ENCODE measurements at regions of chr2 and their contacts with region 1.

Region 1: DNA sequence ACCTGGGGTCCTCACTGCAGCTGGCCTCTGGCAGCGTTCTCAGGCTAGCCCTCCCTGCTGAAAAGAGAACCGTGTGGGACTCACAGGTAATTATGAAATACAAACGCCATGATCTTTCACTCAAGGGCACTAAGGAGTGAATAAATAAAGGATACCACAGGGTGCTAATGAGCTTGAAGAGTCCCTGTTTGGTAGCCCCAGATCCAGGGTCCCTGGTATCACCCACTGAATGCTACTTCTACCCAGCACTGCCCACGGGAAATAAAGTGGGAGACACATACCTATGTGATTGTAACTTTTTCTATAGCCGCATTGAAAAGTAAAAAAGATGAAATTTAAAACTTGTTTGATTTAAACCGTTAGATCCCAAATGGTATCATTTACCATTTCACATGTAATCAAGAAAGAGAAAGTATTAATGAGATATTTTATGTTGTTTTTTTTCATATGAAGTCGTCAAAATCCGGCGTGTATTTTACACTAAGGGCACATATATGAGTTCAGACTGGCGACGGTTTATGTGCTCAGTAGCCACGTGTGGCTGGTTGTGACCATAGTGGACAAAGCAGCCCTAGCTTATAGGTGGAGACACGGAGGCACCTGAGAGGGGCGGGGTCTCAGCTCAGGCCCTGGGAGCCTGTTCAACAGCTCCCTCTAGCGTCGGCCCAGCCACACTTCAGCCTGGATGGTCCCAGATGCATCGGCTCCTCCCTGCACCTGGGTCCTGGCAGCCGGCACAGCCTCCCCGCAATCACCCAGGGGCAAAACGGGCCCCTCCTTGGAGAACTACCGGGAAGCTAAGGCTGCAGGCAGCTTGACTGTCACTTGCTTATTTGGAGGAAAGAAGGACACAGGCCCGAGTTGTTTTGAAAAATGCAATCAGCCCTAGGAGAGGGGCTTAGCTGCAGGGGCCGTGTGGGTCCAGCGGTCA is 39.2 kb downstream of the ODC1 start:
- DNase-seq: peak; percentile 64 to 90 (median 83)
- ATAC-seq: peak; percentile 83
- H3K4me3 ChIP-seq: peak overlapping the region in 1 of 2 experiments; percentile 15
- H3K4me3 Mint-ChIP-seq: peak overlapping the region; percentile 80
- H3K27ac ChIP-seq: peak overlapping the region; percentile 24 to 75
- H3K27ac Mint-ChIP-seq: peak overlapping the region; percentile 94
- H3K4me1 ChIP-seq: peaks cover 40% of the 10 kb centered on the region
- H3K4me1 Mint-ChIP-seq: peaks cover 40% of the 10 kb centered on the region
- H3K27me3 ChIP-seq: no peaks in the 10 kb centered on the region
- H3K27me3 Mint-ChIP-seq: no peaks in the 10 kb centered on the region
- CTCF ChIP-seq: peak; percentile 87

Region 2: GRCh38 chr2:10072656-10073480 is 336.0 kb before region 1 on chr2:
- CTCF ChIA-PET with region 1: interaction called, 13 read pairs
- POLR2A ChIA-PET with region 1: no interaction called
- intact Hi-C with region 1: loop called in 1 of 2 experiments (anchors 1 kb)
- DNase-seq: peak; percentile 59 to 89 (median 80)
- ATAC-seq: peak; percentile 97
- H3K4me3 ChIP-seq: no peak overlapping the region
- H3K4me3 Mint-ChIP-seq: no peak overlapping the region
- H3K27ac ChIP-seq: no peak overlapping the region
- H3K27ac Mint-ChIP-seq: no peak overlapping the region
- H3K4me1 ChIP-seq: no peaks in the 10 kb centered on the region
- H3K4me1 Mint-ChIP-seq: peaks cover 4% of the 10 kb centered on the region
- H3K27me3 ChIP-seq: peaks cover 4 to 11% of the 10 kb centered on the region in 2 experiments
- H3K27me3 Mint-ChIP-seq: peaks cover 35% of the 10 kb centered on the region
- CTCF ChIP-seq: peak; percentile 70

Region 3: GRCh38 chr2:10141736-10142642 is 266.9 kb before region 1 on chr2:
- CTCF ChIA-PET with region 1: interaction called, 34 read pairs
- POLR2A ChIA-PET with region 1: no interaction called
- intact Hi-C with region 1: loop called in 1 of 2 experiments (anchors 1 kb)
- DNase-seq: peak in 5 of 9 experiments; percentile 28 to 49 (median 35)
- ATAC-seq: peak; percentile 62
- H3K4me3 ChIP-seq: no peak overlapping the region
- H3K4me3 Mint-ChIP-seq: peak overlapping the region; percentile 37
- H3K27ac ChIP-seq: no peak overlapping the region
- H3K27ac Mint-ChIP-seq: no peak overlapping the region
- H3K4me1 ChIP-seq: peaks cover 17% of the 10 kb centered on the region
- H3K4me1 Mint-ChIP-seq: peaks cover 18% of the 10 kb centered on the region
- H3K27me3 ChIP-seq: no peaks in the 10 kb centered on the region
- H3K27me3 Mint-ChIP-seq: no peaks in the 10 kb centered on the region
- CTCF ChIP-seq: peak; percentile 17

Region 4: GRCh38 chr2:10278029-10278762 is 130.7 kb before region 1 on chr2:
- CTCF ChIA-PET with region 1: interaction called, 189 read pairs
- POLR2A ChIA-PET with region 1: no interaction called
- intact Hi-C with region 1: no loop called
- DNase-seq: peak in 2 of 9 experiments; percentile 38 to 56
- ATAC-seq: peak; percentile 40
- H3K4me3 ChIP-seq: no peak overlapping the region
- H3K4me3 Mint-ChIP-seq: no peak overlapping the region
- H3K27ac ChIP-seq: peak overlapping the region in 1 of 2 experiments; percentile 29
- H3K27ac Mint-ChIP-seq: no peak overlapping the region
- H3K4me1 ChIP-seq: peaks cover 10% of the 10 kb centered on the region
- H3K4me1 Mint-ChIP-seq: peaks cover 12% of the 10 kb centered on the region
- H3K27me3 ChIP-seq: no peaks in the 10 kb centered on the region
- H3K27me3 Mint-ChIP-seq: no peaks in the 10 kb centered on the region
- CTCF ChIP-seq: no peak

Region 5: GRCh38 chr2:10316336-10316735 is 92.6 kb before region 1 on chr2:
- CTCF ChIA-PET with region 1: interaction called, 10 read pairs
- POLR2A ChIA-PET with region 1: no interaction called
- intact Hi-C with region 1: no loop called
- DNase-seq: no peak
- ATAC-seq: no peak
- H3K4me3 ChIP-seq: no peak overlapping the region
- H3K4me3 Mint-ChIP-seq: no peak overlapping the region
- H3K27ac ChIP-seq: no peak overlapping the region
- H3K27ac Mint-ChIP-seq: peak overlapping the region; percentile 82
- H3K4me1 ChIP-seq: peaks cover 27% of the 10 kb centered on the region
- H3K4me1 Mint-ChIP-seq: peaks cover 62% of the 10 kb centered on the region
- H3K27me3 ChIP-seq: no peaks in the 10 kb centered on the region
- H3K27me3 Mint-ChIP-seq: no peaks in the 10 kb centered on the region
- CTCF ChIP-seq: no peak

Region 6: GRCh38 chr2:10382354-10383061 is 26.4 kb before region 1 on chr2:
- CTCF ChIA-PET with region 1: interaction called, 39 read pairs
- POLR2A ChIA-PET with region 1: interaction called, 6 read pairs
- intact Hi-C with region 1: loop called (anchors 2 kb)
- DNase-seq: peak; percentile 16 to 89 (median 50)
- ATAC-seq: peak; percentile 92
- H3K4me3 ChIP-seq: peak overlapping the region; percentile 47 to 52
- H3K4me3 Mint-ChIP-seq: peak overlapping the region; percentile 58
- H3K27ac ChIP-seq: peak overlapping the region; percentile 41 to 73
- H3K27ac Mint-ChIP-seq: peak overlapping the region; percentile 91
- H3K4me1 ChIP-seq: peaks cover 97% of the 10 kb centered on the region
- H3K4me1 Mint-ChIP-seq: peaks cover 94% of the 10 kb centered on the region
- H3K27me3 ChIP-seq: no peaks in the 10 kb centered on the region
- H3K27me3 Mint-ChIP-seq: no peaks in the 10 kb centered on the region
- CTCF ChIP-seq: no peak

Region 7: GRCh38 chr2:10434886-10435819 is 26.2 kb after region 1 on chr2:
- CTCF ChIA-PET with region 1: interaction called, 126 read pairs
- POLR2A ChIA-PET with region 1: interaction called, 5 read pairs
- intact Hi-C with region 1: no loop called
- DNase-seq: peak; percentile 51 to 86 (median 74)
- ATAC-seq: peak; percentile 74
- H3K4me3 ChIP-seq: no peak overlapping the region
- H3K4me3 Mint-ChIP-seq: no peak overlapping the region
- H3K27ac ChIP-seq: no peak overlapping the region
- H3K27ac Mint-ChIP-seq: no peak overlapping the region
- H3K4me1 ChIP-seq: peaks cover 14% of the 10 kb centered on the region
- H3K4me1 Mint-ChIP-seq: peaks cover 16% of the 10 kb centered on the region
- H3K27me3 ChIP-seq: peaks cover 0 to 4% of the 10 kb centered on the region in 2 experiments
- H3K27me3 Mint-ChIP-seq: peaks cover 2% of the 10 kb centered on the region
- CTCF ChIP-seq: peak; percentile 93

Region 8: GRCh38 chr2:10493636-10494281 is 84.8 kb after region 1 on chr2:
- CTCF ChIA-PET with region 1: no interaction called
- POLR2A ChIA-PET with region 1: no interaction called
- intact Hi-C with region 1: no loop called
- DNase-seq: peak; percentile 58 to 91 (median 83)
- ATAC-seq: peak; percentile 88
- H3K4me3 ChIP-seq: peak overlapping the region in 1 of 2 experiments; percentile 18
- H3K4me3 Mint-ChIP-seq: peak overlapping the region; percentile 43
- H3K27ac ChIP-seq: peak overlapping the region in 1 of 2 experiments; percentile 42
- H3K27ac Mint-ChIP-seq: peak overlapping the region; percentile 82
- H3K4me1 ChIP-seq: peaks cover 26% of the 10 kb centered on the region
- H3K4me1 Mint-ChIP-seq: peaks cover 28% of the 10 kb centered on the region
- H3K27me3 ChIP-seq: no peaks in the 10 kb centered on the region
- H3K27me3 Mint-ChIP-seq: peaks cover 8% of the 10 kb centered on the region
- CTCF ChIP-seq: no peak

Region 9: DNA sequence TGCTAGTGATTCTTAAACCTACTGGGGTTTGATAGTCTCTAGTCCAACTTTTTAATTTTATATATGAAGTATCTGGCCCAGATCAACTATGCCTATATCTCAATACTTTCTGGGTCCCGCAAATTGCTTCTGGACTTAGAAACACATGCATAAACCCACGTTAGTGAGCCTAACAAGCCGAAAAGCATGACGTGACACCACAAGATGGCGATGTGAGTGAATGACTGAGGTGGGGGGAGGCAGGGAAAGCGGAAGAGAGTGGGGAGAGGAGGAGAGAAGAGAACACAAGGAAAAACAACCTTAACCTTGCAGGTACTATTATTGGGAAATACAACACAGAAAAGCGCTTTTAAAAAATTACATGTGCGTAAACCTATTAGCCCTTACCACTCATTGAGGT is 389.9 kb after region 1 on chr2:
- CTCF ChIA-PET with region 1: no interaction called
- POLR2A ChIA-PET with region 1: no interaction called
- intact Hi-C with region 1: no loop called
- DNase-seq: no peak
- ATAC-seq: no peak
- H3K4me3 ChIP-seq: no peak overlapping the region
- H3K4me3 Mint-ChIP-seq: no peak overlapping the region
- H3K27ac ChIP-seq: no peak overlapping the region
- H3K27ac Mint-ChIP-seq: no peak overlapping the region
- H3K4me1 ChIP-seq: no peaks in the 10 kb centered on the region
- H3K4me1 Mint-ChIP-seq: peaks cover 24% of the 10 kb centered on the region
- H3K27me3 ChIP-seq: no peaks in the 10 kb centered on the region
- H3K27me3 Mint-ChIP-seq: no peaks in the 10 kb centered on the region
- CTCF ChIP-seq: no peak

Measured in CD8-positive, alpha-beta T cell (primary cell).